A549 (cell line): ENCODE measurements at regions of chr5 and their contacts with region 1.

Region 1: DNA sequence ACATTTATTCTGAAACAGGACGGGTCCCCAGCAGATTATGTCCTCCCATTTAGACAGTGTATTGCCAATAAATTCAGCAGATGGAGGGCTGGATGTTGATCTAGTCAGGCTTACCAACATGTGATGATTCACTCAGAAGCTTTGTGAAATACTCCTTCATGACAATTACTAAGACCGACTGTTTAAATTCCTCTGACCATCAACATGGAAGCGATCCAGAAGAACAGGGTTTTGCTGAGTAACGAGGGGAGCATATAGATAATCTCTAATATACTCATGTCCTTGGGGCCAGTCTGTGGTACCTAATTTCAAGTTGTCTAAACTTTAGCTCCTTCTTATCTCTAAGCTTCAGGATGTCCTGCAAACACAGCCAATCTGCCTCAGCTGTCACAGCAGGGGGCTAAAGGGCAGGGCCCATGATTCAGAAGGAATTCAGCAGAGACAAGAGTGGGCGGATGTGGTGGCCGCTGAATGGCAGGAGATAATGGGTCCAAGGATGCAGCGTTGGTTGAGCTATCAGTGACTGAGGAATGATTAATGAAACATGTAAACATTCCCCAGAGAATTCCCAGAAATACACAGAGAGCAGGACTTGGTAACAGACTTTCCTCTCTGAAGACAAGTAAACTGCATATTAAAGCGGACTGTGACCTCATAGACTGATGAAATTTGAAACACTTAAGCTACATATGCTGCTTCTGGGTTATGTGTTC is 109.4 kb downstream of the ANKRD55 start:
- DNase-seq: peak; percentile 98 to 99
- ATAC-seq: peak; percentile 98
- H3K4me3 ChIP-seq: peak overlapping the region; percentile 2; the same call in 1 of the 3 replicates
- H3K27ac ChIP-seq: peak overlapping the region; percentile 90 to 96
- H3K4me1 ChIP-seq: peaks cover 51% of the 10 kb centered on the region
- CTCF ChIP-seq: no peak
- EP300 ChIP-seq: peak; percentile 90 to 97; a peak in 4 of 5 replicates
- POLR2A ChIP-seq: no peak
- RAD21 ChIP-seq: peak; percentile 35 to 74

Region 2: DNA sequence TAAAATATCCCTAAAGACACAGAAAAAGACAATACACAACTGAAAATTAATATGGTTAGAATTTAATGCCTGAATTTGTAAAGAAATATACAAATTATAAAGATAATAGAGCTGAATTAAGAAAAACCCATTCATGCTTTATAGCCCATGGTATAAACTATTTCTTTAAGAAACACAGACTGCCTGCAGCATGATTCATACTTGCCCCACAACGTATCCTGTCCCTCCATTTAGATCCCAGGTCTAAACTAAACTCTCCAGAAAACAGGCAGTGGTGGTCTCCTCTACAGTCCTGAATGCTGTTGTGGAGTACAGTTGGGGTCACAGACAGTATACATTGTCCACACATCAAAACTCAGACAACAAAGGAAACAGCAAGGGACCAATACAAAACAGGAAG is 153.7 kb before region 1 on chr5:
- CTCF ChIA-PET with region 1: no interaction called
- POLR2A ChIA-PET with region 1: no interaction called
- DNase-seq: no peak
- ATAC-seq: 0 out of 6 replicates have a peak, but pooled peaks of 1 of the 2 experiments have one; percentile 24
- H3K4me3 ChIP-seq: no peak overlapping the region
- H3K27ac ChIP-seq: peak overlapping the region in 1 of 2 experiments; percentile 44; a peak in 1 of 6 replicates
- H3K4me1 ChIP-seq: peaks cover 12% of the 10 kb centered on the region
- CTCF ChIP-seq: no peak
- EP300 ChIP-seq: no peak
- POLR2A ChIP-seq: no peak
- RAD21 ChIP-seq: no peak

Region 3: GRCh38 chr5:55994574-55995333 is 128.9 kb before region 1 on chr5 and contains the start of gene IL6ST:
- CTCF ChIA-PET with region 1: interaction called, 3 read pairs
- POLR2A ChIA-PET with region 1: interaction called, 19 read pairs
- DNase-seq: peak; percentile 96 to 97
- ATAC-seq: peak; percentile 95
- H3K4me3 ChIP-seq: peak within 1 kb of the TSS; percentile 80
- H3K27ac ChIP-seq: peak within 1 kb of the TSS; percentile 93 to 94
- H3K4me1 ChIP-seq: peaks cover 45% of the 10 kb centered on the region
- CTCF ChIP-seq: no peak
- EP300 ChIP-seq: no peak
- POLR2A ChIP-seq: peak; percentile 50
- RAD21 ChIP-seq: peak in 1 of 2 experiments; percentile 11; a peak in 2 of 5 replicates
- polyA plus RNA-seq, gene IL6ST: 183 and 198 TPM in 2 replicates

Region 4: GRCh38 chr5:56112526-56113121 is 11.1 kb before region 1 on chr5:
- CTCF ChIA-PET with region 1: no interaction called
- POLR2A ChIA-PET with region 1: interaction called, 10 read pairs
- DNase-seq: peak; percentile 59 to 88
- ATAC-seq: peak; percentile 84 to 90
- H3K4me3 ChIP-seq: no peak overlapping the region
- H3K27ac ChIP-seq: peak overlapping the region; percentile 73 to 88
- H3K4me1 ChIP-seq: peaks cover 45% of the 10 kb centered on the region
- CTCF ChIP-seq: no peak
- EP300 ChIP-seq: peak; percentile 91 to 96; a peak in 4 of 5 replicates
- POLR2A ChIP-seq: no peak
- RAD21 ChIP-seq: peak; percentile 1 to 20; a peak in 2 of 5 replicates

Region 5: DNA sequence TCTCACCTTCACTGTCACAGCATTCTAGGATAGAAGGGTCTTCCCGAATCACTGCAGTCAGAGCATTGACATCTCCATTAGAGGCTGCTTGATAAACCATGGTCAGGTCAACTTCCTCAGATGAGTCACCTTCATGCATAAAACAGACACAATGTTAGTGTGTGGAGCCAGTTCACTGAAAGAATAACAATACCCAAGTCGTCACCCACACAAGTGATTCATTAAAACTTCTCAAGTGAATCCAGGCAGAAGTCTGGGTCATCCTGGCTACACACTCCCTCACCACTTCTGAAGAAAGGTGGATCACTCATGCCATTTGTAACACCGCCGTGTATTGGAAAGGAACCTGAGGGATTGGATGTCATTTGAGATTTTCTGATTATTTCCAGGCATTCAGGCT is 59.8 kb after region 1 on chr5:
- CTCF ChIA-PET with region 1: no interaction called
- POLR2A ChIA-PET with region 1: no interaction called
- DNase-seq: peak in 1 of 2 experiments; percentile 66
- ATAC-seq: peak; percentile 56 to 62; a peak in 4 of 6 replicates
- H3K4me3 ChIP-seq: no peak overlapping the region
- H3K27ac ChIP-seq: peak overlapping the region in 1 of 2 experiments; percentile 2; a peak in 2 of 6 replicates
- H3K4me1 ChIP-seq: peaks cover 24% of the 10 kb centered on the region
- CTCF ChIP-seq: no peak
- EP300 ChIP-seq: no peak
- POLR2A ChIP-seq: no peak
- RAD21 ChIP-seq: no peak